T-cell (primary cell): ENCODE measurements at regions of chr3 and their contacts with region 1.

Region 1: DNA sequence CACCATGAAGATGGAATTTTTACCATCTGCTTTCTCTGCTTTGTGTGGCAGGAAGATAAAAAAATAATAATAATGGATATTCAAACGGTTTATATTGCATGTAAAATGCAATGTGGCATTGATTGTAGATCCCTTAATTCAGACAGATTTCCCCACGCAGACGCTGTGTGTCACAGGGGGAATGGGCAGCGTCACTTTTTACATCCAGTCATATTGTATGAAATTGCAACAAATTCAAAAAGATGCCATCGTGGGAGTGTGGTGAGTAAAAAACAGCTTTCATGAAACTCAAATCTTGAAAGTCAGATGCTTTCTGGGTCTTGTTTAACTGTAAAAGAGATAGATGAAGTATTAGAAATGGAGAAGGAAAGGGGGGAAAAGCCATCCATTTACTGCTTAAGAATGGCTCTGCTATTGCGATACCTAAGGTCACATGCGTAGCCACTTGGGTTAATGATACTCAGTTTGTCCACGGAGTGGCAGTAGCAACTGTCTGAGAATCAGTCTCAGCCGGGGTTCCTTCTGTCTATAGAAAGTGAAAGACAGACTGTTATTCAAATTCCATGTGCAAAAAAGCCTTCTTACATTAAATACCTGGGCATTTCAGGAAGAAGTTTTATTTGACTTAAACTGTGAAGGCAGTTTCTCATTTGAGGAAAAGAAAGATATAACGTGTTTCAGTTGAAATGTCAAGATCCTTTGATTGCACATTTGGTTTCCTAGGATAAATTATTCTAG is 28.5 kb downstream of the BTD start:
- DNase-seq: peak in 34 of 35 experiments; percentile 10 to 85 (median 56)
- ATAC-seq: peak; percentile 93 to 100 (median 98)
- H3K4me3 ChIP-seq: no peak overlapping the region
- H3K4me3 Mint-ChIP-seq: peak overlapping the region in 2 of 3 donors; percentile 40 to 45
- H3K27ac ChIP-seq: no peak overlapping the region
- H3K27ac Mint-ChIP-seq: peak overlapping the region in 1 of 2 donors; percentile 58
- H3K4me1 ChIP-seq: peaks cover 3 to 19% of the 10 kb centered on the region in 2 experiments
- H3K4me1 Mint-ChIP-seq: peaks cover 20 to 46% (median 39%) of the 10 kb centered on the region in 3 donors
- H3K27me3 ChIP-seq: no peaks in the 10 kb centered on the region
- H3K27me3 Mint-ChIP-seq: no peaks in the 10 kb centered on the region

Region 2: GRCh38 chr3:15812183-15812582 is 182.2 kb after region 1 on chr3:
- CTCF ChIA-PET with region 1: interaction called, 8 to 13 read pairs
- POLR2A ChIA-PET with region 1: no interaction called
- DNase-seq: peak in 1 of 35 experiments; percentile 57
- ATAC-seq: no peak
- H3K4me3 ChIP-seq: no peak overlapping the region
- H3K4me3 Mint-ChIP-seq: no peak overlapping the region
- H3K27ac ChIP-seq: no peak overlapping the region
- H3K27ac Mint-ChIP-seq: no peak overlapping the region
- H3K4me1 ChIP-seq: peaks cover 2 to 3% of the 10 kb centered on the region in 2 experiments
- H3K4me1 Mint-ChIP-seq: peaks cover 28 to 40% (median 29%) of the 10 kb centered on the region in 3 donors
- H3K27me3 ChIP-seq: no peaks in the 10 kb centered on the region
- H3K27me3 Mint-ChIP-seq: no peaks in the 10 kb centered on the region